Vagina (tissue), 2 donors: ENCODE measurements at regions of chr12 and their contacts with region 1.

Region 1: DNA sequence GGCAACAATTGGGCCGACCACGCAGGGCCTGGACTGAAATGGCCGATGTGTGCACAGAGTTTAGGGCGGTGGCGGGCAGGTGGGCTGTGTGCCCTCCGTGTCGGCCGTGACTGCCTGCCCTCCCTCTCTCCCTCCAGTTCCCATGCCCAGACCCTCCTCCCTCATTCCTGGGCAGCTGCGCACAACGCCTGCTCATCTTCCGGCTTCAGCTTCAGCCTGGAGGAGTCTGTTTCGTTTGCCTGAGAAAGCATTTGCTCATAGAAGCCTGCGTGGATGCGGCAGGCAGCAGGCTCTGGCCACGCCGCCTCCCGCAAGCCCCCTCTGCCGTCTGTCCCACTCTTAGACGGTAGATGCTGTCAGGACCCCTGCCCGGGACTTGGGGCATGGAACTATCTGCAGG is 47.3 kb upstream of the FZD10 start:
- DNase-seq: no peak
- H3K4me3 ChIP-seq: no peak overlapping the region
- H3K27ac ChIP-seq: no peak overlapping the region
- H3K4me1 ChIP-seq: no peaks in the 10 kb centered on the region
- H3K27me3 ChIP-seq: no peaks in the 10 kb centered on the region
- CTCF ChIP-seq: no peak
- POLR2A ChIP-seq: no peak

Region 2: GRCh38 chr12:130086248-130086647 is 28.7 kb before region 1 on chr12:
- intact Hi-C with region 1: loop called (anchors 1 kb)
- DNase-seq: no peak
- H3K4me3 ChIP-seq: no peak overlapping the region
- H3K27ac ChIP-seq: no peak overlapping the region
- H3K4me1 ChIP-seq: peaks cover 17% of the 10 kb centered on the region
- H3K27me3 ChIP-seq: no peaks in the 10 kb centered on the region
- CTCF ChIP-seq: no peak
- POLR2A ChIP-seq: no peak

Region 3: GRCh38 chr12:130162267-130162666 is 47.3 kb after region 1 on chr12 and contains the start of gene FZD10:
- intact Hi-C with region 1: no loop called
- DNase-seq: no peak
- H3K4me3 ChIP-seq: peak within 1 kb of the TSS; percentile 54 to 64
- H3K27ac ChIP-seq: peak within 1 kb of the TSS; percentile 78
- H3K4me1 ChIP-seq: peaks cover 35% of the 10 kb centered on the region
- H3K27me3 ChIP-seq: no peaks in the 10 kb centered on the region
- CTCF ChIP-seq: no peak
- POLR2A ChIP-seq: no peak
- total RNA-seq, gene FZD10: 5.2 TPM